ENCODE measurements at regions of chr15 and their contacts with region 1.

Region 1: DNA sequence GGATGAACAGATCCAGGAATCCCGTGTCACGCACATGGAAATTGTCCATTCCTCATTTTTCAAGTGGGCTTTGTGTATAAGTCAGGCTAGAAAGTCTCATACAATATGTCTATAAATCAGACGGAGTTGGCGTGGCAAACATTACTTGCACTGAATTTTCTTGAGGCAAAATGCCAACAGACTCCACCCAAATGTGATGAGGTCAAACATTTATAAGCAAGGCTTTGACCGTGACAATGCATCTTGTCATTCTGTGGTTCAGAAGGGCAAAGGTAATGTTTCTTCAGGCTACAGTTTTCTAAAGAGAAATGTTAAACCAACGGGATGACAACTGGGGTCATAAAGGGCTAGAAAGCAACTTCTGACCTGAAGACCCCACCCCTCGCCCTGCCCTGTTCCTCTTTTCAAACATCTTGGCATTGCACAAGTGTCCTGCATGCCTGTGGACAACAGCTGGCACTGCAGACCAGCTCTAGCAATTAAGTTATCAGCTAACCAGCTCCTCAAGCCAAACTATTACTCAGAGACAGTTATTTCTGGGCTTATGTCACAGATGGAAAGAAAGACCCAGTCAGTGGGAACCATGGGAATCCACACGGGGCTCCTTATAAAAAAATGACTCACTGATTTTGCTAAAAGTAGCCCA is 36.5 kb upstream of the SPTBN5 start:
- H3K4me3 Mint-ChIP-seq: peak overlapping the region; percentile 9
- H3K27ac Mint-ChIP-seq: peak overlapping the region; percentile 75
- H3K4me1 Mint-ChIP-seq: peaks cover 78% of the 10 kb centered on the region
- H3K27me3 Mint-ChIP-seq: no peaks in the 10 kb centered on the region

Region 2: DNA sequence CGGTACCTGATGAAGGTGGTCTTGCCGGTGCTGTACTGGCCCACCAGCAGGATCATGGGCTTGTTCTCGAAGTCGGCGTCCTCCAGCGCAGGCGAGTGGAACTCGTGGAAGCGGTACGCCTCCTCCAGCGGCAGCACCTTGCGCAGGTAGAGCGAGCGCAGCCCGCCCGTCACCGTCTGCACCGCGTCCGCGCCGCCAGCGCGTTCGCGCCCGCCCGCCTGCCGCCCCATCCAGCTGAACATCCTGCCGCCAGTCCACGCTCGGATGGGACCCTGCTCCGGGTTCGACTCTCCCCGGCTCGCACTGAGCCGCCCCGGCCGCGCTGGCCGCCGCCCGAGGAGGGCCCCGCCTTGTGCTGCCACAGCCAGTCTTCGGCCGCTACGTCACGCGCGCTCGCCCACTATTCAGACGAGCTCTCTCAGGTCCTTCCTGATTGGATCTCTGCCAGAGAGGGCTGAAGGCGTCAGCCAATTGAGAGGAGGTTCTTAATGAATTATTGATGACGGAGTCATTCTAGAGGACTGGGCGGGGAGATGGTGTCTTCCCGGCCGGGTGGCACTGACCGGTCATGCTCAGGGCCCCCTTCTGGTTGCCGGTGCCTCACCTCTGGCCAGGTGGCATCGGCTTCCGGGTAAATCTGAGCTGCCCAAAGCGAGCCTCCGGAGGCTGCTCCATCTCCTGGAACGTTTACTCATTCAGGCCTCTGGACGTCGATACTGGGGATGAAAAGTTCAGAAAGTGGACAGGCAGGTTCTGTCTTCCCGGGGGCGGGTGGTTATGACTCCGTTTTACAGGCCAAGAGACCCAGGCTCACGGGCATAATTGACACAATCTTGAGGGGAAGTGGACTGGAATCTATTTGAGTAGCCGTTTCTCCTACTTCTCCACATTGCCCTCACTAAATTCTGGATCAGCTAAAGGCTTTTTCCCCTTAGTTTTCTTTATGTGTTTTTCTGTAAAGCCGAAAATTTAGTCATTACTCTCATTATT is 42.2 kb after region 1 on chr15 and contains the start of gene EHD4:
- intact Hi-C with region 1: loop called (anchors 2 kb)
- H3K4me3 Mint-ChIP-seq: peak within 1 kb of the TSS; percentile 91
- H3K27ac Mint-ChIP-seq: peak within 1 kb of the TSS; percentile 93
- H3K4me1 Mint-ChIP-seq: peaks cover 51% of the 10 kb centered on the region
- H3K27me3 Mint-ChIP-seq: no peaks in the 10 kb centered on the region